Activated B cell treated with CpG ODN at 0.5 μM for 24 hours (primary cell): ENCODE measurements at regions of chr21 and their contacts with region 1.

Region 1: GRCh38 chr21:36310016-36310415 is 10.0 kb upstream of the MORC3 start:
- DNase-seq: no peak
- ATAC-seq: peak; percentile 93
- H3K4me3 Mint-ChIP-seq: peak overlapping the region; percentile 51
- H3K27ac Mint-ChIP-seq: peak overlapping the region; percentile 86
- H3K4me1 Mint-ChIP-seq: peaks cover 34% of the 10 kb centered on the region
- H3K27me3 Mint-ChIP-seq: no peaks in the 10 kb centered on the region
- CTCF ChIP-seq: no peak

Region 2: DNA sequence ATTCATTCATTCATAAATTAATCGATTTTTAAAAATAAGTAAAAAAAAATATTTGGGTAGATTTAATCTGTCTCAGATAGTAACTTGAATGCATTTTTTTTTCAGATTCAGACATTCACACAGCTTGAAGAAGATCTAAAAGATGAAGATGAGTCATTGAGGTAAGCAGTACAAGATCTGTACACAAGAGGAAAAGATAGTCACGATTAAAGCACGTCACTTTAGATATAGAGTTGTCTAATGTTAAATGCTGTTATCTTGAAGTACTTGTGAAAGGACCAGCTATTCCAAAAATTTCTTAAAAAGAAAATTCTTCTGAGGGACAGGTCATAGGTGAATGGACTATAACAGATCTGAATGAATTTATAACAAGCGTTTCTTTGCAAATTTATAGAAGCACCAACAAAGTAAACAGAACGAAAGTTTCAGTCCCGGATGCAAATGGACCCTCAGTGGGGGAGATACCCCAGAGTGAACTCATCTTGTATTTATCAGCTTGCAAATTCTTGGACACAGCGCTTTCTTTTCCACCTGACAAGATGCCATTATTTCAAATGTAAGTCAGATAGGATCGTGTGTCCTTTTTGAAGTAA is 21.3 kb before region 1 on chr21:
- CTCF ChIA-PET with region 1: no interaction called
- POLR2A ChIA-PET with region 1: interaction called, 12 read pairs
- intact Hi-C with region 1: loop called (anchors 1 kb)
- DNase-seq: no peak
- ATAC-seq: peak; percentile 51
- H3K4me3 Mint-ChIP-seq: peak overlapping the region; percentile 62
- H3K27ac Mint-ChIP-seq: peak overlapping the region; percentile 91
- H3K4me1 Mint-ChIP-seq: peaks cover 21% of the 10 kb centered on the region
- H3K27me3 Mint-ChIP-seq: no peaks in the 10 kb centered on the region
- CTCF ChIP-seq: no peak

Region 3: DNA sequence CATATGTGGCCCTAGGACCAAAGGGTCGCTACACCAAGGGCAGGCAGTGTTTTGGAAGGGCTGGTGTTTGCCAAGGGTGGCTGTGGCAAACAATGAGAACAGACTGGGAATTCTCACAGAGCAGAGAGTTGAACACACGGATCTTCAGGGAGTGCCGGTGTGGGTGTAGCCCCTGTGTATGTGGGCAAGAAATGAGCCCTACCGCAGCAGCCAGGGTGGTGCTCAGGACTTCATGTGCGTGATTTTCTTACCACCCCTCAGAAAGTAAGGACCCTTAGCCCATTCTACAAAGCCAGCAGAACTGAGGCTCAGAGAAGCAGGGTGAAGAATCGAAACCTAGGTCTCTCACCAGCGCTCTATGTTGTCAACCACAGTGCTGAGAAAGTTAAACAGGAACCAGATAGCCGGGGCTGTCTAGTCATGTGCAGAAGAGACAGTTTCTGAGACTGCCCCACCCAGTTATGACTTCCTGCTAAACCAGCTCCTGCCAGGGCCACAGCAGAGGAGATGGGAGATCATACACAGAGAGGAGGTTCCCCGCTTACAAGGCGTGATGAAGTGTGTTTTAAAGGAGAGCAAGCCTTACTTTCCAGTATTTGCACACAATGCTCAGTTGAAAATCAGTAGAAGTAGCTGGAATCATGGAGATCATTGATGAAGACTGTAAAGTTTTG is 12.0 kb before region 1 on chr21:
- CTCF ChIA-PET with region 1: interaction called, 4 read pairs
- POLR2A ChIA-PET with region 1: interaction called, 74 read pairs
- intact Hi-C with region 1: loop called (anchors 1 kb)
- DNase-seq: peak; percentile 46
- ATAC-seq: peak; percentile 95
- H3K4me3 Mint-ChIP-seq: peak overlapping the region; percentile 78
- H3K27ac Mint-ChIP-seq: peak overlapping the region; percentile 98
- H3K4me1 Mint-ChIP-seq: peaks cover 61% of the 10 kb centered on the region
- H3K27me3 Mint-ChIP-seq: no peaks in the 10 kb centered on the region
- CTCF ChIP-seq: no peak